Activated CD4-positive, alpha-beta T cell treated with anti-CD3 and anti-CD28 coated beads for 36 hours (primary cell): ENCODE measurements at regions of chr6 and their contacts with region 1.

Region 1: GRCh38 chr6:109373762-109374161 is 8.5 kb downstream of the CD164 start:
- DNase-seq: peak; percentile 77
- ATAC-seq: peak; percentile 95
- H3K4me3 Mint-ChIP-seq: peak overlapping the region; percentile 68
- H3K27ac Mint-ChIP-seq: peak overlapping the region; percentile 98
- H3K4me1 Mint-ChIP-seq: peaks cover 77% of the 10 kb centered on the region
- H3K27me3 Mint-ChIP-seq: no peaks in the 10 kb centered on the region

Region 2: GRCh38 chr6:109202409-109203284 is 171.1 kb before region 1 on chr6:
- CTCF ChIA-PET with region 1: interaction called, 6 read pairs
- POLR2A ChIA-PET with region 1: no interaction called
- intact Hi-C with region 1: loop called (anchors 1 kb)
- DNase-seq: peak; percentile 59
- ATAC-seq: peak; percentile 95
- H3K4me3 Mint-ChIP-seq: no peak overlapping the region
- H3K27ac Mint-ChIP-seq: peak overlapping the region; percentile 59
- H3K4me1 Mint-ChIP-seq: peaks cover 14% of the 10 kb centered on the region
- H3K27me3 Mint-ChIP-seq: no peaks in the 10 kb centered on the region

Region 3: GRCh38 chr6:109242925-109243324 is 130.8 kb before region 1 on chr6:
- CTCF ChIA-PET with region 1: no interaction called
- POLR2A ChIA-PET with region 1: no interaction called
- intact Hi-C with region 1: no loop called
- DNase-seq: no peak
- ATAC-seq: no peak
- H3K4me3 Mint-ChIP-seq: no peak overlapping the region
- H3K27ac Mint-ChIP-seq: no peak overlapping the region
- H3K4me1 Mint-ChIP-seq: peaks cover 2% of the 10 kb centered on the region
- H3K27me3 Mint-ChIP-seq: no peaks in the 10 kb centered on the region

Region 4: DNA sequence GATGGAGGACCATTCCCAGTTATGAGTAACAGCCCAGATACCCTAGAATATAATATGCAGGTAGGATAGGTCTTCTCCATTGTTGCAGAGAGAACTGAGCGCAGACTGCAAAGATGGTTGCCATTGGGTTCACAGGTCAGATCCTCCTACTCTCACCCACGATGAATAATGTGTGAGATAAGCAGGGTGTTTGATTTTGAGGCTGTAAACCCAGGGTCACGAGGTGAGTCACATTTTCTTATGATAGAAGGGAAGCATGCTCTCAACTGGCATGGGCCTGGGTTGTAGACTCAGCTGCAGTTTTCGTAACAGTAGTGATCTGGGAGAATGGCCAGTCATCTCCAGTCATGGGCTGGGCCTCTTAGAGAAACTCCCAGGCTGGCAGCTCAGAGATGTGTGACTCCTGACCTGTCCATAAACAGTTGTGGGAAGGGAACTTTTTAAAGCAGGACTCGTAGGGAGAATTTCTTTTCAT is 65.7 kb before region 1 on chr6:
- CTCF ChIA-PET with region 1: interaction called, 3 read pairs
- POLR2A ChIA-PET with region 1: interaction called, 6 read pairs
- intact Hi-C with region 1: loop called in 1 of 2 experiments (anchors 1 kb)
- DNase-seq: peak; percentile 75
- ATAC-seq: peak; percentile 91
- H3K4me3 Mint-ChIP-seq: no peak overlapping the region
- H3K27ac Mint-ChIP-seq: peak overlapping the region; percentile 76
- H3K4me1 Mint-ChIP-seq: peaks cover 35% of the 10 kb centered on the region
- H3K27me3 Mint-ChIP-seq: no peaks in the 10 kb centered on the region

Region 5: DNA sequence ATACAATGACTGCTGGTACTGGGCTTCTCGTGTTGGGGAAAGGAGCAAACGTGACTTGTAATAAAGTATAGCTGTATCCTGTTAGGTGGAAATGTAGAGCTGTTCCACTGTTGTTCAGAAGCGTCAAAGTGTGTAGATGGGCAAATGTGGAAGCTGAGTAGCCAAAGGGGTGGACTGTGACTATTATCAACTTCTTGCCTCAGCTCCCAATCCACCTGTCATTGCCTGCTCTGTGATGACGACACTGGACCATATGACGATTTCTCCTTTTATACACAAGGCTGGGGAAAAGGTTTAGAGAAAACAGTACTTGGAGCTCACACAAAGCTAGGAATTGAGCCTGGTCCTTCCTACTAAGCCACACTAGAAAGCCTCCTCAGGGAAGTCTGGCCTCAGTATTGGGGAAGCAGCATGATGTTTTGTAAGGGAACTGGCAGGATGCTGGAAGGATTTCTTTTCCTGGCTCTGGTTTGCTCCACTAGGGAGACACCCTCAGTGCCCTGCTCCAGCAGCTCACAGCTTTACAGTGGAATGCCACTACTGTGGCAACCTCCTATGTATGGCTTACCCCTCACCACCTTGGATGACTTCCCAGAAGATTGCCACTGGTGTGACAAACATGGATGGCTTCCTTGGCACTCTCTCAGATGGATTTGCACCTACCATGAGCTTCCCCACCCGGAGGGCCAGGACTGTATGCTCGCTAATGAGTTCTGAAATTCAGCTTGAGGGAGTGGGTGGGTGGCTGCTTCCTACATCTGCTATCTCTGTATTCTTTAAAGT is 11.5 kb before region 1 on chr6:
- CTCF ChIA-PET with region 1: interaction called, 3 read pairs
- POLR2A ChIA-PET with region 1: interaction called, 13 read pairs
- intact Hi-C with region 1: no loop called
- DNase-seq: no peak
- ATAC-seq: no peak
- H3K4me3 Mint-ChIP-seq: no peak overlapping the region
- H3K27ac Mint-ChIP-seq: no peak overlapping the region
- H3K4me1 Mint-ChIP-seq: peaks cover 11% of the 10 kb centered on the region
- H3K27me3 Mint-ChIP-seq: no peaks in the 10 kb centered on the region

Region 6: GRCh38 chr6:109482905-109483735 is 109.4 kb after region 1 on chr6 and contains the start of gene ZBTB24:
- CTCF ChIA-PET with region 1: no interaction called
- POLR2A ChIA-PET with region 1: interaction called, 3 read pairs
- intact Hi-C with region 1: loop called in 1 of 2 experiments (anchors 2 kb)
- DNase-seq: peak; percentile 94
- ATAC-seq: peak; percentile 84
- H3K4me3 Mint-ChIP-seq: peak within 1 kb of the TSS; percentile 96
- H3K27ac Mint-ChIP-seq: peak within 1 kb of the TSS; percentile 94
- H3K4me1 Mint-ChIP-seq: peaks cover 43% of the 10 kb centered on the region
- H3K27me3 Mint-ChIP-seq: no peaks in the 10 kb centered on the region
- total RNA-seq, gene ZBTB24: 12.0 to 14.7 TPM